Adrenal gland (tissue), 19 donors: ENCODE measurements at regions of chr1 and their contacts with region 1.

Region 1: DNA sequence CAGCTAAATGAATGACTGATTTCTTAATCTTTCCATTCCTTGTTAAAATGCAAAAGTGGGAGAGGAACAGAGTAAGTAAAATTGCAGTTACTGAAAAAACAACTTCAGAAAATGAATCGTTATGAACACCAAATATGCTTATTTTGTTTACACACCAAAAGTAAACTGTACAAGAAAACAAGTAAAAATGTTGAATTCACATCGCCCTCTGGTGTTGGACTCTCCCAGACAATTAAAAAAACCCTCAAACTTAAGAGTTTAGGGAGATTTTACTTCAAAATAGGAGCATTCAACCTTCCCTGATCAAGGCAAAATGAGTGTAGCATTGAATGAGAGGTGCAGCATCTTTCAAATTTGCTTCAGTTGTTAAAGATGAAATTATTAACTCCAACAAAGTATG is 19.4 kb upstream of the ESRRG start:
- DNase-seq: peak in 2 of 7 donors; percentile 17 to 29
- H3K4me3 ChIP-seq: no peak overlapping the region
- H3K27ac ChIP-seq: no peak overlapping the region
- H3K4me1 ChIP-seq: no peaks in the 10 kb centered on the region
- H3K27me3 ChIP-seq: no peaks in the 10 kb centered on the region
- CTCF ChIP-seq: peak; percentile 38 to 59 (median 50)
- POLR2A ChIP-seq: no peak

Region 2: GRCh38 chr1:216310776-216311175 is 431.8 kb before region 1 on chr1:
- intact Hi-C with region 1: loop called in 1 of 2 experiments (anchors 10 kb)
- DNase-seq: peak; percentile 16 to 58 (median 44)
- H3K4me3 ChIP-seq: no peak overlapping the region
- H3K27ac ChIP-seq: no peak overlapping the region
- H3K4me1 ChIP-seq: no peaks in the 10 kb centered on the region
- H3K27me3 ChIP-seq: no peaks in the 10 kb centered on the region
- CTCF ChIP-seq: peak; percentile 13 to 50 (median 43)
- POLR2A ChIP-seq: no peak

Region 3: DNA sequence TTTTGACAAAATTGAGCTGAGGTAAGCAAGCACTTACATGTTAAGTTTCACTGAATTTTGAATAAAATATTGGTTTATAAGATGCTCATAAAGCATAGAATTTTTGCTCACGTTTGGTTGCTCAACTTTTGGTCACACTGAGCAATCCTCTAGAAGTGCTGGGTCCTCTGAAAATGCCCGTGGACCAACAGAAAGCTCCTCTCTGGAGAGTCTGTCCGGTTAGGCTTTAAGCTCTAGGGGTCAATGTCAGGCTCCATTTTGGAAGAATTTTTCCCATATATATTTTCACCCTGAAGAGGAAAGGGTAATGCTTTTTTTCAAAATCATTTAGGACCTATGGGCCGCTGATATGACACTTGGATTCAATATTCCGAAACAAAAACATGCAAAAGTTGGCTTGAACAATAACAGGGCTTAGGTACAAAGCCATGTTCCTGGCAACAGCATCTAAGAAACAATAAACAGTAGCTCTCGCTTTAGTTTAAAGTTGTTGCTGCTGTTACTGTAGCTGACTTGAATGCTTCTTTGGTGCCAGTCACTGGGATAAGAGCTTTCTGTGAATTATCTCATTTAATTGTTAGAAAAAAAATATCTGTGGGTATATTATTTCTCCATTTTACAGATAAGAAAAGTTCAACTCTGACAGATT is 112.3 kb after region 1 on chr1:
- intact Hi-C with region 1: no loop called
- DNase-seq: no peak
- H3K4me3 ChIP-seq: no peak overlapping the region
- H3K27ac ChIP-seq: no peak overlapping the region
- H3K4me1 ChIP-seq: no peaks in the 10 kb centered on the region
- H3K27me3 ChIP-seq: no peaks in the 10 kb centered on the region
- CTCF ChIP-seq: no peak
- POLR2A ChIP-seq: no peak